HepG2 (cell line): ENCODE measurements at regions of chr4 and their contacts with region 1.

Region 1: GRCh38 chr4:87465739-87466366 is 43.5 kb downstream of the NUDT9 start:
- DNase-seq: peak; percentile 45
- ATAC-seq: peak; percentile 39; the same call in 1 of the 3 replicates
- H3K4me3 ChIP-seq: no peak overlapping the region
- H3K27ac ChIP-seq: no peak overlapping the region
- H3K4me1 ChIP-seq: no peaks in the 10 kb centered on the region
- H3K27me3 ChIP-seq: no peaks in the 10 kb centered on the region
- CTCF ChIP-seq: peak; percentile 61
- EP300 ChIP-seq: no peak
- POLR2A ChIP-seq: no peak
- RAD21 ChIP-seq: no peak

Region 2: DNA sequence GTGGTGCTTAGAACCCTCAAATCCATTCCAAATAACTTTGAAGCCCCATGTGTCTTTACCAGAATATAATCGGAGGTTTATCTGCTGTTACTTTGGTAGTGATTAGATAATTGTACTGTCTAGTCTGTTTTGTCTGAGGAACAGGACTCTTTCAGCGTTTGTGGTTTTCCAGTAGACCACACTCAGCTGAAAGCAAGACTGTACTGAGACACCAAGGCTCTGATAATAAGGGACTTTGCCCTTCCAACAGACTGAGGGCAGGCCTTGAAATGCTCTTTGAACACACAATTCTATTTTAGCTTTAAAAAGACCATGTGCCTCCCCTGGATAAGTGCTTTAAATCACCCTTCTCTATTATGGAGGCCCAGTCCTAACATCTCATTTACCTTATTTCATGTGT is 321.5 kb before region 1 on chr4:
- CTCF ChIA-PET with region 1: no interaction called
- POLR2A ChIA-PET with region 1: no interaction called
- in situ Hi-C with region 1: loop called (anchors 25 kb)
- intact Hi-C with region 1: no loop called
- DNase-seq: no peak
- ATAC-seq: peak; percentile 36
- H3K4me3 ChIP-seq: no peak overlapping the region
- H3K27ac ChIP-seq: no peak overlapping the region
- H3K4me1 ChIP-seq: peaks cover 14% of the 10 kb centered on the region
- H3K27me3 ChIP-seq: no peaks in the 10 kb centered on the region
- CTCF ChIP-seq: no peak
- EP300 ChIP-seq: no peak
- POLR2A ChIP-seq: no peak
- RAD21 ChIP-seq: no peak

Region 3: DNA sequence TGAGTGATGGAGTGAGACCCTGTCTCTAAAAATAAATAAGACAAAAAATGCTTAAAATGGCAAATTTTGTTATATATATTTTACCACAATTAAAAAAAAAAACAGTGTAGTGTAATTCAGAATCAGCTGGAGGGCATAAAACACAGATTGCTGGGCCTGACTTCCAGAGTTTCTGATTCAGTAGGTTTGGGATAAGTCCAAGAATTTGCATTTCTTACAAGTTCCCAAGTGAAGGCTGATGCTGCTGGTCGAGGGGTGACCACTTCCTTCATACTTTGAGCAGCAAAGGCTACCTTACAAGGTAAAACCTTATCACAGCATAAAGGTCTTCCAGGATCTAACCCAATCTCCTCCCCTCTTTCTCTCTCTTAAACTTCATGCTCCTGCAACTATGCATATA is 286.1 kb before region 1 on chr4:
- CTCF ChIA-PET with region 1: no interaction called
- POLR2A ChIA-PET with region 1: no interaction called
- in situ Hi-C with region 1: no loop called
- intact Hi-C with region 1: no loop called
- DNase-seq: no peak
- ATAC-seq: no peak
- H3K4me3 ChIP-seq: no peak overlapping the region
- H3K27ac ChIP-seq: no peak overlapping the region
- H3K4me1 ChIP-seq: no peaks in the 10 kb centered on the region
- H3K27me3 ChIP-seq: no peaks in the 10 kb centered on the region
- CTCF ChIP-seq: no peak
- EP300 ChIP-seq: no peak
- POLR2A ChIP-seq: no peak
- RAD21 ChIP-seq: no peak

Region 4: GRCh38 chr4:87270144-87270543 is 195.7 kb before region 1 on chr4:
- CTCF ChIA-PET with region 1: interaction called, 29 read pairs
- POLR2A ChIA-PET with region 1: no interaction called
- in situ Hi-C with region 1: loop called (anchors 5 kb)
- intact Hi-C with region 1: loop called (anchors 1 kb)
- DNase-seq: peak; percentile 62
- ATAC-seq: peak; percentile 93
- H3K4me3 ChIP-seq: peak overlapping the region in 1 of 3 experiments; percentile 1; a peak in 1 of 6 replicates
- H3K27ac ChIP-seq: no peak overlapping the region
- H3K4me1 ChIP-seq: peaks cover 18% of the 10 kb centered on the region
- H3K27me3 ChIP-seq: peaks cover 0 to 3% of the 10 kb centered on the region in 2 experiments; a peak in 1 of 5 replicates
- CTCF ChIP-seq: peak; percentile 82
- EP300 ChIP-seq: no peak
- POLR2A ChIP-seq: no peak
- RAD21 ChIP-seq: peak; percentile 87

Region 5: GRCh38 chr4:87304671-87305432 is 161.0 kb before region 1 on chr4:
- CTCF ChIA-PET with region 1: no interaction called
- POLR2A ChIA-PET with region 1: no interaction called
- in situ Hi-C with region 1: no loop called
- intact Hi-C with region 1: no loop called
- DNase-seq: no peak
- ATAC-seq: no peak
- H3K4me3 ChIP-seq: no peak overlapping the region
- H3K27ac ChIP-seq: no peak overlapping the region
- H3K4me1 ChIP-seq: peaks cover 6% of the 10 kb centered on the region; the same call in 1 of the 2 replicates
- H3K27me3 ChIP-seq: peaks cover 0 to 4% of the 10 kb centered on the region in 2 experiments; a peak in 1 of 5 replicates
- CTCF ChIP-seq: no peak
- EP300 ChIP-seq: no peak
- POLR2A ChIP-seq: no peak
- RAD21 ChIP-seq: no peak

Region 6: GRCh38 chr4:87353592-87353991 is 112.3 kb before region 1 on chr4:
- CTCF ChIA-PET with region 1: interaction called, 19 read pairs
- POLR2A ChIA-PET with region 1: no interaction called
- in situ Hi-C with region 1: no loop called
- intact Hi-C with region 1: loop called (anchors 5 kb)
- DNase-seq: peak; percentile 29
- ATAC-seq: peak; percentile 80
- H3K4me3 ChIP-seq: no peak overlapping the region
- H3K27ac ChIP-seq: no peak overlapping the region
- H3K4me1 ChIP-seq: no peaks in the 10 kb centered on the region
- H3K27me3 ChIP-seq: no peaks in the 10 kb centered on the region
- CTCF ChIP-seq: peak; percentile 65
- EP300 ChIP-seq: no peak
- POLR2A ChIP-seq: no peak
- RAD21 ChIP-seq: peak; percentile 36; the same call in 1 of the 2 replicates

Region 7: GRCh38 chr4:87375719-87376291 is 90.0 kb before region 1 on chr4:
- CTCF ChIA-PET with region 1: interaction called, 56 read pairs
- POLR2A ChIA-PET with region 1: no interaction called
- in situ Hi-C with region 1: loop called (anchors 10 kb)
- intact Hi-C with region 1: loop called (anchors 1 kb)
- DNase-seq: peak; percentile 61
- ATAC-seq: peak; percentile 75
- H3K4me3 ChIP-seq: no peak overlapping the region
- H3K27ac ChIP-seq: no peak overlapping the region
- H3K4me1 ChIP-seq: peaks cover 15% of the 10 kb centered on the region
- H3K27me3 ChIP-seq: no peaks in the 10 kb centered on the region
- CTCF ChIP-seq: peak; percentile 75
- EP300 ChIP-seq: peak in 1 of 2 experiments; percentile 20; a peak in 1 of 4 replicates
- POLR2A ChIP-seq: no peak
- RAD21 ChIP-seq: peak; percentile 76

Region 8: DNA sequence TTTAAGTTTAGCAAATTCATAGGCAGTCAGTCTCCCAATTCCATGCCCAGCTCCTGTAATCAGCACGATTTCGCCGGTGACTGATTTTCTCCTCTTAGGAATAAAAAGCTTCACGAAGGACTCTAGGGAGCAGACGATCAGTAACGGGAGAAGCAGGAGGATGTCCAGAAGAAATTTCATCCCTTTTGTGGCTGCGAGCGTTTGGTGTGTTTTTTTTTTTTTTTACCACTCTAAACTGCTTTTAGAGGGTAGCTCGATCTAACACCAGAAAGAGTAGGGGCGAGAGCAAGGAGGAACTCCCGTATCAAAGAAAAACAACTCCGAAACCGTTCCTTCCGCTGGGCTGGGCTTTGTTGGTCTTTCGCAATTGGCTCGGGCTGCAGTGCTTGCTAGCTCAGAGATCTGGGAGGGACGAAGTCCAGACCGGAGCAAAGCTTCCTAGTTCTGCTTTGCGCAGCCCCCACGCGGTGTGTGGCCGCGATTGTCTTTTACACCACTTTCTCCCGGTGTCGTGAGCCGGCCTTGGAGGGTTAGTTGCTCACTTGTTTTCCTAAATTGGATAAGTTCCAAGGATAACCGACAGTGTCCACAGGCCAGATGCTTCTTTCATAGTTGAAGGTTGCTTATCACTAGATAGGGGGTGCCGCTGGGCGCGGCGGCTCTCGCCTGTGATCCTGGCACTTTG is 74.8 kb before region 1 on chr4 and contains the start of gene HSD17B11:
- CTCF ChIA-PET with region 1: no interaction called
- POLR2A ChIA-PET with region 1: no interaction called
- in situ Hi-C with region 1: no loop called
- intact Hi-C with region 1: loop called (anchors 2 kb)
- DNase-seq: peak; percentile 96
- ATAC-seq: peak; percentile 97
- H3K4me3 ChIP-seq: peak within 1 kb of the TSS; percentile 81 to 93 (median 88)
- H3K27ac ChIP-seq: peak within 1 kb of the TSS; percentile 87
- H3K4me1 ChIP-seq: peaks cover 30% of the 10 kb centered on the region
- H3K27me3 ChIP-seq: no peaks in the 10 kb centered on the region; a peak in 1 of 5 replicates
- CTCF ChIP-seq: peak; percentile 44
- EP300 ChIP-seq: peak in 1 of 2 experiments; percentile 78; a peak in 2 of 4 replicates
- POLR2A ChIP-seq: peak; percentile 76 to 88
- RAD21 ChIP-seq: 0 out of 2 replicates have a peak, but pooled peaks have one; percentile 42
- total RNA-seq, gene HSD17B11: 120 and 158 TPM in 2 replicates

Region 9: DNA sequence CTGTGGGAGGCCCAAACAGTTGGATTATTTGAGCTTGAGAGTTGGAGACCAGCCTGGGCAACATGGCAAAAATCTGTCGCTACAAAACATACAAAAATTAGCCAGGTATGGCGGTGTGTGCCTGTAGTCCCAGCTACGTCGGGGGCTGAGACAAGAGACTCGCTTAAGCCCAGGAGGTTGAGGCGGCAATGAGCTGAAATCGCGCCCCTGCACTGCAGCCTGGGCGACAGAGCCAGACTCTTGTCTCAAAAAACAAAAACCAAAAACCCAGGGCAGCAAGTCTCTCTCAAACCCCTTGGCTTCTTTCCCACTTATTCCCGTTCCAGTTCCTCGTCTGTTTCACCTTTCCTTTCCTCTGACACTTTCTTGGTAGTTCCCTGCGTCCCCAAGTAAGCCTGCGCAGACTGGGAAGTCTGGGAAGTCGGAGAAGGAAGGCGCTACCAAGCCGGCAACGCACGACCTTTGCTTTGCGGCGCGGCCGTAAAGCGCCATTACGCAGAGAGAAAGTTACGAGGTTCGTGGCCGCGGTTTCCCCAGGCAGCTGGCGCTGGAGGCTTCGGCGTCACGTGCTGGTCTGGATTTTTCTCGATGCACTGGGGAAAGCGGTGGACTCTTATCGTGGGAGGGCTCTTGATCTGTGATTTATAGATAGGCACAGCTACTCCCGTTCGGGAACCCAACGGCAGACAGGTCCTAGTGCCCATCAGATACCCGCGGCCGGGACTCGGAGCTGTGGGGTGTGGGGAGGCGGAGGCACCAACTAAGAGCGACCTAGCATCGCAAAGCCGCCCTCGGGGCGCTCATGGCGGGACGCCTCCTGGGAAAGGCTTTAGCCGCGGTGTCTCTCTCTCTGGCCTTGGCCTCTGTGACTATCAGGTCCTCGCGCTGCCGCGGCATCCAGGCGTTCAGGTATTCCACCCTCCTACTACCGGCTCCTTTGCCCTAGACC is 43.5 kb before region 1 on chr4 and contains the start of gene NUDT9:
- CTCF ChIA-PET with region 1: no interaction called
- POLR2A ChIA-PET with region 1: no interaction called
- in situ Hi-C with region 1: no loop called
- intact Hi-C with region 1: loop called (anchors 5 kb)
- DNase-seq: peak; percentile 80
- ATAC-seq: peak; percentile 82
- H3K4me3 ChIP-seq: peak within 1 kb of the TSS; percentile 79 to 91 (median 90)
- H3K27ac ChIP-seq: peak within 1 kb of the TSS; percentile 95
- H3K4me1 ChIP-seq: peaks cover 72% of the 10 kb centered on the region
- H3K27me3 ChIP-seq: no peaks in the 10 kb centered on the region; a peak in 1 of 5 replicates
- CTCF ChIP-seq: 0 out of 2 replicates have a peak, but pooled peaks have one; percentile 10
- EP300 ChIP-seq: 0 out of 4 replicates have a peak, but pooled peaks of 1 of the 2 experiments have one; percentile 3
- POLR2A ChIP-seq: peak; percentile 70 to 77
- RAD21 ChIP-seq: 0 out of 2 replicates have a peak, but pooled peaks have one; percentile 30
- total RNA-seq, gene NUDT9: 9.7 and 10.4 TPM in 2 replicates